ENCODE measurements at regions of chr17 and their contacts with region 1.

Region 1: GRCh38 chr17:16215273-16215964 is at the start of gene NCOR1:
- DNase-seq: peak; percentile 95
- H3K4me3 Mint-ChIP-seq: peak within 1 kb of the TSS; percentile 99
- H3K27ac Mint-ChIP-seq: peak within 1 kb of the TSS; percentile 84
- H3K4me1 Mint-ChIP-seq: peaks cover 11% of the 10 kb centered on the region
- H3K27me3 Mint-ChIP-seq: no peaks in the 10 kb centered on the region
- CTCF ChIP-seq: peak; percentile 20
- total RNA-seq, gene NCOR1: 120 and 138 TPM in 2 replicates

Region 2: DNA sequence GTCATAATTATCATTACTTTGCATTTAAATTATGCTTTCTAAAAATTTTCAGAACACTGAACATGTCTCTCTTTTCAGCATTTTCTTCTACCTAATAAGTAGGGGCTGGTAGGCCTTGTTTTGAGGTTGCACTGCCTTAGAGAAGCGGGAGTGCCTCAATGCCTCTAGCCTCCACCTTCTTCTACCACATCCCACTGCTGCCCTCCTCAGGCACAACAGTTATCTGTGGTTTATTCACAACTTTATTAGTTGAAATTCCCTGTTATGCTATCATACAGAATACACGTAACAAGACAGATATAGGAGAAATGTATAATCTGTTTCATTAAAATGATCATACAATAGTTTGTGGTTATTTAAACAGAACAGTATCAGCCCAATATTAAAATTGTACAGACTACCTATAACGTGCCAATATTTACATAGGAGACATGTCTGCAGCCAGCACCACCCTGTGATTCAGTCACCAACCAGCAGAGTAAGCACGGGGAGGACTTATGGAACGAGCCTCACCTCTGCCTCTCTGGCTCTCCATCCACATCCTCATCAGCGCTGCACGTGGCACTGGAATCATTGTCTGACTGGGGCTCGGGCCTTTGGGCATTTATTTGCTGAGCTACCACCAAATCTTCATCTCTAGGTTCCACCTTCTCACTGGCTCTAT is 114.5 kb before region 1 on chr17:
- CTCF ChIA-PET with region 1: no interaction called
- POLR2A ChIA-PET with region 1: no interaction called
- intact Hi-C with region 1: no loop called
- DNase-seq: peak; percentile 41
- H3K4me3 Mint-ChIP-seq: no peak overlapping the region
- H3K27ac Mint-ChIP-seq: no peak overlapping the region
- H3K4me1 Mint-ChIP-seq: no peaks in the 10 kb centered on the region
- H3K27me3 Mint-ChIP-seq: no peaks in the 10 kb centered on the region
- CTCF ChIP-seq: peak; percentile 11

Region 3: DNA sequence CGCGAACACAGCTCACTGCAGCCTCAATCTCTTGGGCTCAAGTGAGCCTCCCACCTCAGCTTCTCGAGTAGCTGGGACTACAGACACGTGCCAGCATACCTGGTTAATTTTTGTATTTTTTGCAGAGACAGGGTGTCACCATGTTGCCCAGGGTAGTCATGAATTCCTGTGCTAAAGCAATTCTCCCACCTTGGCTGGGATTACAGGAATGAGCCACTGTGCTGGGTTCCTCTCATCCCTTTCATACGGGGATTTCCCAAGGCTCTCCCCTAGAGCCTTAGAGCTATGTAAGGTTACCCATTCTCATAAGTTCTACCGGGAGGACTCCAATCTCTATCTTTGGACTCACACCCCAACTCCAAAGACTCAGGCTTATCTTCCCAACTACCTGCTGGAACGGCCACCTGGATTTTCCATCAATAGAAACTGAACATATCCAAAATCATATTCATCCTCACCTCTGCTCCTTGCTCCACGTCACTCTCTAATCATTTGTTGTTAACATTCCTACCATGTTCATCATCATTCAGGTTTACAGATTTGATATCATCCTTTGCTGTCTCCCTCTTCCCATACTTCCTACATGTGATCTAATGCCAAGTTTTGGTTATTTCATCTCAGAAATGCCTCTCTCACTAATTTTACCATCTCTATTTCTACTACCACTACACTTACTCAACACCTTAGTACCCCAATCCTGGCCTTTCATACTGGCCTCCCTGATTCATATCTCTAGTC is 92.6 kb before region 1 on chr17:
- CTCF ChIA-PET with region 1: no interaction called
- POLR2A ChIA-PET with region 1: interaction called, 12 read pairs
- intact Hi-C with region 1: no loop called
- DNase-seq: peak; percentile 25
- H3K4me3 Mint-ChIP-seq: no peak overlapping the region
- H3K27ac Mint-ChIP-seq: peak overlapping the region; percentile 0
- H3K4me1 Mint-ChIP-seq: peaks cover 21% of the 10 kb centered on the region
- H3K27me3 Mint-ChIP-seq: no peaks in the 10 kb centered on the region
- CTCF ChIP-seq: no peak

Region 4: DNA sequence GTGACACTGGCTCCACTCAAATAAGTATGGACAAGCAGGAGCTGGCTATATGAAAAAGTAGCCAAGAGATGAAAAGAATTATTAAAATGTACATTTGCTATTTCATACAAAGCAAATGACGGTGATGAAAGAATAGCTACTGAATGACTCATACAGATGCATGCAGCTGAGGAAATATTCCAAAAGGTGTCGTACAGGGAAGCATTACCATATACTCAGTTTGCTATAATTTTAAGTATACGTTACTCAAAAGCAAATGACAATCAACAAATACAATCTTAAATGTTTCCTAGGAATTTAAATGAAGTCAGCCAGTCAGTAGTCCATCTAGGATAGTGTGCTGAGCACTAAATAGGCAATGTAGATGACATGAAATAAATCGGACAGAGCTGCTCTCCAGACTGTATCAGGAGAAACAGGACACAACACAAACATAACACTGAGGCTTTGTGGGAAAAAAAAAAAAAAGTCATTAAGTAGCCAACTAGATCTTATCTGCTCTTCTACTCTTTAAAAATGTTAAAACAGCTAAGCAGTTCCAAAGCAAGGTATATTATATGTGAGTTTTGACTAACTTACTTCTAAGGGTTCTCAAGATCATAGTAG is 65.1 kb before region 1 on chr17:
- CTCF ChIA-PET with region 1: no interaction called
- POLR2A ChIA-PET with region 1: interaction called, 22 read pairs
- intact Hi-C with region 1: no loop called
- DNase-seq: peak; percentile 63
- H3K4me3 Mint-ChIP-seq: peak overlapping the region; percentile 45
- H3K27ac Mint-ChIP-seq: peak overlapping the region; percentile 83
- H3K4me1 Mint-ChIP-seq: peaks cover 12% of the 10 kb centered on the region
- H3K27me3 Mint-ChIP-seq: no peaks in the 10 kb centered on the region
- CTCF ChIP-seq: no peak

Region 5: DNA sequence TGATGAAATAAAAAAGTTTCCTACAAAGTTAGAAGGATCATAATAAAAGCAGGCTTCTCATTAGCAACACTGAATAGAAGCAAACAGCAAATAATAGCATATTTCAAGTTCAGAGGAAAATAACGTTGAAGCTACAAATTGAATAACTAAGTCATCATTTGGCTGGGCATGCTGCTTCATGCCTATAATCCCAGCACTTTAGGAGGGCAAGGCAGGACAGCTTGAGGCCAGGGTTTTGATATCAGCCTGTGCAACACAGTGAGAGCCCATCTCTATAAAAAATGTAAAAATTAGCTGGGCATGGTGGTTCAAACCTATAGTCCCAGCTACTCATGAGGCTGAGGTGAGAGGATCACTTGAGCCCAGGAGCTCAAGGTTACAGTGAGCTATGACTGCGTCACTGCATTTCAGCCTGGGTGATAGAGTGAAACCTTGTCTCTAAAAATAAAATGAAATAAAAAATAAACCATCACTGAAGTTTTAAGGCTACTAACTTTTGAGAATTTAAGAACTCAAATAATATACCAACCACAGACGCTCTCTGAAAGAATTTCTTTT is 25.5 kb before region 1 on chr17:
- CTCF ChIA-PET with region 1: interaction called, 4 read pairs
- POLR2A ChIA-PET with region 1: interaction called, 50 read pairs
- intact Hi-C with region 1: no loop called
- DNase-seq: peak; percentile 8
- H3K4me3 Mint-ChIP-seq: no peak overlapping the region
- H3K27ac Mint-ChIP-seq: peak overlapping the region; percentile 79
- H3K4me1 Mint-ChIP-seq: peaks cover 16% of the 10 kb centered on the region
- H3K27me3 Mint-ChIP-seq: no peaks in the 10 kb centered on the region
- CTCF ChIP-seq: no peak

Region 6: GRCh38 chr17:16199093-16199492 is 16.3 kb before region 1 on chr17:
- CTCF ChIA-PET with region 1: interaction called, 3 read pairs
- POLR2A ChIA-PET with region 1: interaction called, 18 read pairs
- intact Hi-C with region 1: no loop called
- DNase-seq: no peak
- H3K4me3 Mint-ChIP-seq: no peak overlapping the region
- H3K27ac Mint-ChIP-seq: peak overlapping the region; percentile 3
- H3K4me1 Mint-ChIP-seq: peaks cover 16% of the 10 kb centered on the region
- H3K27me3 Mint-ChIP-seq: no peaks in the 10 kb centered on the region
- CTCF ChIP-seq: no peak

Region 7: DNA sequence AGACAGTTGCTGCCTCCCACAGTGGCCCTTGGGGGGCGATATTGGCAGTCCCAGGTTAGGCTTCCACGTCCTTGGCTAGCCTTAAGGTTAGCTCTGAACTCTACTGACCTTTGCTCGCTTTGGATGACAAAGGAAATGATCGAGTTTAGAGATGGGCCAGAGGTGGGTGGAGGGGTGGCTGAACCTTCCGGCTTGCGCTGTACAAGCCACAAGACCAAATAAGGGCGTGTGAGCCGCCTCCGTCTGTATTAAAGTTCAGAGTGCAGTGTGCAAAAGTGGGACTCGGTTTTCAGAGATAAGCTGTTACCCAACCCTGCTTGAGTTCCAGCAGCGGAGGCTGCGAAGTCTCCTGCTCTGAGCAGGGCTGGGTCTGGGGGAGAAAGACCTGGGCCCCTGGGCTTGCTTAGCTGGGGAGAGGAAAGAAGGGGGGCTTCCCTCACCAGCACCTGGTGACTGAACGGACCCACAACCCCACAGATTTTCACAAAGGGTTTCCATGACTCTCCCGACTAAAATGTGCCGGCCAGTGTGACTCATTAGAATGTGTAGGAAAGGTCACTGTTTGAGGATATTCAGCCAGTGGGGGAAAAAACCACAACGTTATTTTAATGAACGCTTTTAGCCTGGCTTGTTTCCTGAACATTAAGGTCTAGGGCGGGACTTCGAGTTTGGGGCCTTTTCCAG is 70.7 kb after region 1 on chr17:
- CTCF ChIA-PET with region 1: no interaction called
- POLR2A ChIA-PET with region 1: interaction called, 15 read pairs
- intact Hi-C with region 1: loop called (anchors 5 kb)
- DNase-seq: peak; percentile 96
- H3K4me3 Mint-ChIP-seq: peak overlapping the region; percentile 54
- H3K27ac Mint-ChIP-seq: peak overlapping the region; percentile 88
- H3K4me1 Mint-ChIP-seq: peaks cover 35% of the 10 kb centered on the region
- H3K27me3 Mint-ChIP-seq: no peaks in the 10 kb centered on the region
- CTCF ChIP-seq: no peak

Region 8: DNA sequence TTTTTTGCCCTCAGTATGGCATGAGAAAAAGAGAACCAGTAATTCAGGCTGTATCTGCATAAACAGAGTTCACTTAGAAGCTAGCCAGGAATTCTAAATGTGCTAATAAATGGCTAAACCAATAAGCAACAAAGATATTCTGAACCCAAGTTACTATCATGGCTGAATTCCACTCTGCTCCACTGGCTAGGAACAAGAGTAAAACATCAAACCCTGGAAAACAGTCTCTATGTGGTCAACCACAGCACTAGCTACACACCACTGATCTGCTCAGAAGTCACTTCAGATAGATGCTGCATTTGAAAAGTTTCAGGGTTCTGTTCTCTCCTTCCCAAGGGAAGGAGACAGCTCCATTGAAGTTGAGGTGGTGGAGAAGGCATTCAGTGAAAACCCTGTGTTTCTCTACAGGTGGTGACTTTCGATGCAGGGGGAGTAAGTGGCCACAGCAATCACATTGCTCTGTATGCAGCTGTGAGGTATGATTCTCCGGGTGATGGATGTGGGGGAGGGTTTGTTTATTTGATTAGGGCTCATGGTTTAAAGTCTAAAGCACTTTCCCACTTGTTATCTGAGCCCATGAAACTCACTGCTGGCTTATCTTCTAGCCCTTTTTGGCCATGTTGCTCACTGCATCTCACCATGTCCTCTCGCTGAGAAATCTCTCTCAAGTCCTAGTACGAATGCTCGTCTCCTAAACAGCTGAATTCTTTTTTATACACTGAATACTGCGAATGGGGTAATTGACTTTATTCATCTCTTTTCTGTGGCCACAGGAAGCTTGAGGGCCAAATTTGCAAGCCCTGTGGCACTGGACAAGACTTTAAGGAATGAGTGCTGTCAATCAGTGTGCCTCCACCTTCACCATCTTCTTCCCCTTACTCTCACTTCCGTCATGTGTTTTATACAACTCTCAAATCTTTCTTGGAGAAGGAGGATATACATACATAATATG is 98.0 kb after region 1 on chr17:
- CTCF ChIA-PET with region 1: no interaction called
- POLR2A ChIA-PET with region 1: no interaction called
- intact Hi-C with region 1: no loop called
- DNase-seq: no peak
- H3K4me3 Mint-ChIP-seq: no peak overlapping the region
- H3K27ac Mint-ChIP-seq: no peak overlapping the region
- H3K4me1 Mint-ChIP-seq: no peaks in the 10 kb centered on the region
- H3K27me3 Mint-ChIP-seq: no peaks in the 10 kb centered on the region
- CTCF ChIP-seq: no peak

Region 9: DNA sequence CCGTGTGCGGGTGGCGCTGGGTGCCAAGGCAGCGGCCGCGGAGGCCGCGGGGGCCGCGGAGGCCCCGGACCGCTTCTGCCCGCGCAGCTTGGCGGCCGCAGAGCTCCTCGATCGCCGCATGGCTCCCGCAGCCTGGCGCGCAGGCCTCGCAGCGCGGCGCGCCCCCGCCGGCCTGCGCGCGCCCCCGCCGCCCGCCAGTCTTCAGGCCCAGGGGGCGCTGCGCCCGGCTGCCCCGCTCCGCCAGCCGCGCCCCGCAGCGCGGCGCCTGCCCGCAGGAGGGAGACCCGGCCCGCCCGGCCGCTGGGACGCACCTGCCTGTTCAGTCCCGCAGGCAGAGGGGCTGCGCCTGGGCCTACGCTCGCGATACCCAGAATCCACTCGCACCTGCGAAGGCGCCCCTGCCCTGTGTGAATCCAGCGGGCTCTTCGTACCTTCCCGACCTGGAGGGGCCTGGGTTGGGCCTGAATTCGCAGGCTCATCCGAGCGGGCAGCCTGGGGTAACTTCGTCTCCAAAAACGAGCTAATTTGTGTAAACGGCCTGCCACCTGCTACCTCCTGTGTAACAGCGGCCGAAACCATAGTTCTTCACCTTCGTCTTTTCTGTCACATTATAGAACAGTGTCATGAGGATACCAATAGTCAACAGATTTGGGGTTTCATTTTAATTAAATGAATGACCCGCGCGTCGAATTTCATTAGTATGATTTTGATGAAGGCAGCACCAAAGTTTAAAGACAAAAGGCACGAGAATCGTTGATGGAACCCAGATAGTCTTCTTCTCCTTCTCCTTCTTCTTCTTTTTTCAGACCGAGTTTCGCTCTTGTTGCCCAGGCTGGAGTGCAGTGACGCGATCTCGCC is 138.1 kb after region 1 on chr17 and contains the start of gene CENPV:
- CTCF ChIA-PET with region 1: interaction called, 4 read pairs
- POLR2A ChIA-PET with region 1: interaction called, 24 read pairs
- intact Hi-C with region 1: no loop called
- DNase-seq: peak; percentile 11
- H3K4me3 Mint-ChIP-seq: peak within 1 kb of the TSS; percentile 81
- H3K27ac Mint-ChIP-seq: peak within 1 kb of the TSS; percentile 43
- H3K4me1 Mint-ChIP-seq: peaks cover 4% of the 10 kb centered on the region
- H3K27me3 Mint-ChIP-seq: no peaks in the 10 kb centered on the region
- CTCF ChIP-seq: peak; percentile 9
- total RNA-seq, gene CENPV: 22.4 and 27.7 TPM in 2 replicates

Region 10: GRCh38 chr17:16363749-16364536 is 148.5 kb after region 1 on chr17:
- CTCF ChIA-PET with region 1: no interaction called
- POLR2A ChIA-PET with region 1: no interaction called
- intact Hi-C with region 1: no loop called
- DNase-seq: peak; percentile 78
- H3K4me3 Mint-ChIP-seq: no peak overlapping the region
- H3K27ac Mint-ChIP-seq: no peak overlapping the region
- H3K4me1 Mint-ChIP-seq: no peaks in the 10 kb centered on the region
- H3K27me3 Mint-ChIP-seq: no peaks in the 10 kb centered on the region
- CTCF ChIP-seq: peak; percentile 74

Measured in MCF 10A (cell line).